Panc1 (cell line): ENCODE measurements at regions of chr5 and their contacts with region 1.

Region 1: DNA sequence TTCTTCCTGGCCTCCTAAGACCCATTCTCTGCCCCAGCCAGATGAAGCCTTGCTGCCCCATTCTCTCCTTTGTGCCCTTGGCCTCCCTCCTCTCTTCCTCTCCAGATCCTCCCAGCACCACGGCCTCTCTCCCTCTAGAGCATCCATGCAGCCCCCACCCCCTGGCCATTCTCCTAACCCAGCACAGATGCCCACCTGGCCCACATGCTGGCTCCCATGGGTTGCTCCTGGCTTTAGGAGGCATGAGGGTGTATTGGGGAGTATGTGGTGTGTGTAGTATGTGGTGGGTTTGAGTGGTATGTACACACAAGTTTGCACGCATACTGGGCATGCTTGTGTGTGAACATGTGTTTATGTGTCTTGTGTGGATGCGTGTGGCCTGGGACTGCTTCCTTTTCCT is 47.1 kb downstream of the FOXI1 start:
- DNase-seq: no peak
- ATAC-seq: no peak
- H3K4me3 ChIP-seq: no peak overlapping the region
- H3K27ac ChIP-seq: peak overlapping the region; percentile 98
- H3K4me1 ChIP-seq: peaks cover 37% of the 10 kb centered on the region
- H3K27me3 ChIP-seq: no peaks in the 10 kb centered on the region
- CTCF ChIP-seq: no peak

Region 2: DNA sequence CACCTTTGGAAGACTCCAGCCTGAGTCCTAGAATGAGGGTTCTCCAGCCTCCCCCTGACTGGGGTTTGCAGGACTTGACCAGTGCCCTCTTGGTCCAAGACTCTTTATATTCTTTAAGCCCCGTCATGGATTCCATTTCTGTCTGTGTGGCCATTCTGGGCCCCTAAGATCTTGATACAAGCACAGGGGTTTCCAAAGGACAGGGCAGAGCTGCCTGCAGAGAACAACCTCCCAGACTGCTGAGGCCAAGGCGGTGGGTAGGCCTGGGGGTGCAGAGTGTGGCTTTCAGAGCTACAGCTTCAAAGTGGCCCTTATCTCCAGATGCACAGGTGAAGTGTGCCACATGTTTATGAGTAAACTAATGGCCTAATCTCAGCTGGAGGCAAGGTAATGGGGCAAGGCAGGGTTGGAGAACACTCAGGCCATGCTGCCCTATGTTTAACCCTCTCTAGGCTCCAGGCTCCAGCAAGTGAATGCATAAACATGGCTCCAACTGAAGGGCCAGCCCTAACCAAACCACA is 15.0 kb before region 1 on chr5:
- CTCF ChIA-PET with region 1: no interaction called
- POLR2A ChIA-PET with region 1: interaction called, 14 read pairs
- in situ Hi-C with region 1: no loop called
- intact Hi-C with region 1: no loop called
- DNase-seq: no peak
- ATAC-seq: no peak
- H3K4me3 ChIP-seq: no peak overlapping the region
- H3K27ac ChIP-seq: peak overlapping the region; percentile 64; the same call in 1 of the 2 replicates
- H3K4me1 ChIP-seq: peaks cover 4% of the 10 kb centered on the region; the same call in 1 of the 2 replicates
- H3K27me3 ChIP-seq: no peaks in the 10 kb centered on the region
- CTCF ChIP-seq: no peak